HCT116 (cell line): ENCODE measurements at regions of chr11 and their contacts with region 1.

Region 1: GRCh38 chr11:61332797-61333549 is at the starts of genes DDB1 and TKFC:
- DNase-seq: peak; percentile 83
- ATAC-seq: peak; percentile 88
- H3K4me3 ChIP-seq: peak within 1 kb of the TSS; percentile 85 to 97
- H3K27ac ChIP-seq: peak within 1 kb of the TSS; percentile 92
- H3K4me1 ChIP-seq: peaks cover 28 to 46% of the 10 kb centered on the region in 2 experiments
- H3K27me3 ChIP-seq: no peaks in the 10 kb centered on the region
- CTCF ChIP-seq: no peak
- POLR2A ChIP-seq: peak; percentile 75
- RAD21 ChIP-seq: no peak
- total RNA-seq, gene DDB1: 269 TPM
- total RNA-seq, gene TKFC: 156 TPM

Region 2: DNA sequence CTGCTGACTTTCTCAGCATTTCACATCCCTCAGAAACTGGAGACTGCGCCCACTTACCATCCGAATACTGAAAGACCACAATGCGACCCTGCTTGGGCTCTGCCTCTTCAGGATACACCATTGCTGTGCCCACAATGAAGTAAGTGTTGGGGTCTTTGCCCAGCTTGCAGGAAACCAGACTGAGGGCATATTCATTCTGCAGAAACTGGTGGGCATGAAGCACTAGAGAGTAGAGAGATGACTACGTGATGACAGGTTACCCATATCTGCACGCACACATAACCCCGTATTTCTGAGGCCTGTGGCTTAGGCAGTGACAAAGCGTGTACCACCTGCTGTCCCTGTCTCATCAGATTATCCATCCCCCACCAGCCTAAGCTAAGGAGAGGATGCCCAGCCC is 23.2 kb before region 1 on chr11:
- CTCF ChIA-PET with region 1: no interaction called
- POLR2A ChIA-PET with region 1: no interaction called
- RAD21 ChIA-PET with region 1: no interaction called
- intact Hi-C with region 1: no loop called
- DNase-seq: no peak
- ATAC-seq: no peak
- H3K4me3 ChIP-seq: no peak overlapping the region
- H3K27ac ChIP-seq: no peak overlapping the region
- H3K4me1 ChIP-seq: no peaks in the 10 kb centered on the region
- H3K27me3 ChIP-seq: no peaks in the 10 kb centered on the region
- CTCF ChIP-seq: no peak
- POLR2A ChIP-seq: no peak
- RAD21 ChIP-seq: no peak

Region 3: GRCh38 chr11:61347916-61348461 is 15.0 kb after region 1 on chr11:
- CTCF ChIA-PET with region 1: interaction called, 14 read pairs
- POLR2A ChIA-PET with region 1: interaction called, 3 read pairs
- RAD21 ChIA-PET with region 1: no interaction called
- intact Hi-C with region 1: no loop called
- DNase-seq: no peak
- ATAC-seq: peak; percentile 36; the same call in 1 of the 2 replicates
- H3K4me3 ChIP-seq: no peak overlapping the region
- H3K27ac ChIP-seq: no peak overlapping the region
- H3K4me1 ChIP-seq: no peaks in the 10 kb centered on the region
- H3K27me3 ChIP-seq: no peaks in the 10 kb centered on the region
- CTCF ChIP-seq: no peak
- POLR2A ChIP-seq: no peak
- RAD21 ChIP-seq: no peak

Region 4: GRCh38 chr11:61361686-61362541 is 28.9 kb after region 1 on chr11 and contains the starts of genes CYB561A3 and TMEM138:
- CTCF ChIA-PET with region 1: interaction called, 17 read pairs
- POLR2A ChIA-PET with region 1: interaction called, 45 read pairs
- RAD21 ChIA-PET with region 1: no interaction called
- intact Hi-C with region 1: no loop called
- DNase-seq: peak; percentile 88
- ATAC-seq: peak; percentile 92
- H3K4me3 ChIP-seq: peak within 1 kb of the TSS; percentile 89 to 93
- H3K27ac ChIP-seq: peak within 1 kb of the TSS; percentile 97
- H3K4me1 ChIP-seq: peaks cover 0 to 22% of the 10 kb centered on the region in 2 experiments; a peak in 2 of 4 replicates
- H3K27me3 ChIP-seq: no peaks in the 10 kb centered on the region
- CTCF ChIP-seq: no peak
- POLR2A ChIP-seq: peak; percentile 92
- RAD21 ChIP-seq: no peak
- total RNA-seq, gene CYB561A3: 34.1 TPM
- total RNA-seq, gene TMEM138: 45.0 TPM

Region 5: GRCh38 chr11:61384271-61385242 is 51.6 kb after region 1 on chr11:
- CTCF ChIA-PET with region 1: interaction called, 120 read pairs
- POLR2A ChIA-PET with region 1: interaction called, 14 read pairs
- RAD21 ChIA-PET with region 1: interaction called, 14 to 15 read pairs
- intact Hi-C with region 1: loop called (anchors 1 kb)
- DNase-seq: no peak
- ATAC-seq: peak; percentile 31; the same call in 1 of the 2 replicates
- H3K4me3 ChIP-seq: no peak overlapping the region
- H3K27ac ChIP-seq: no peak overlapping the region; the same call in 1 of the 2 replicates
- H3K4me1 ChIP-seq: no peaks in the 10 kb centered on the region
- H3K27me3 ChIP-seq: no peaks in the 10 kb centered on the region
- CTCF ChIP-seq: peak; percentile 3 to 32 (median 20); a peak in 2 of 6 replicates
- POLR2A ChIP-seq: no peak
- RAD21 ChIP-seq: peak; percentile 36

Region 6: GRCh38 chr11:61392981-61393595 is 60.1 kb after region 1 on chr11:
- CTCF ChIA-PET with region 1: interaction called, 14 read pairs
- POLR2A ChIA-PET with region 1: interaction called, 7 read pairs
- RAD21 ChIA-PET with region 1: no interaction called
- intact Hi-C with region 1: loop called (anchors 2 kb)
- DNase-seq: no peak
- ATAC-seq: peak; percentile 50
- H3K4me3 ChIP-seq: peak overlapping the region; percentile 76 to 81
- H3K27ac ChIP-seq: peak overlapping the region; percentile 90
- H3K4me1 ChIP-seq: peaks cover 3 to 16% of the 10 kb centered on the region in 2 experiments
- H3K27me3 ChIP-seq: no peaks in the 10 kb centered on the region
- CTCF ChIP-seq: peak; percentile 16 to 32 (median 19); a peak in 3 of 6 replicates
- POLR2A ChIP-seq: no peak
- RAD21 ChIP-seq: peak; percentile 49

Region 7: DNA sequence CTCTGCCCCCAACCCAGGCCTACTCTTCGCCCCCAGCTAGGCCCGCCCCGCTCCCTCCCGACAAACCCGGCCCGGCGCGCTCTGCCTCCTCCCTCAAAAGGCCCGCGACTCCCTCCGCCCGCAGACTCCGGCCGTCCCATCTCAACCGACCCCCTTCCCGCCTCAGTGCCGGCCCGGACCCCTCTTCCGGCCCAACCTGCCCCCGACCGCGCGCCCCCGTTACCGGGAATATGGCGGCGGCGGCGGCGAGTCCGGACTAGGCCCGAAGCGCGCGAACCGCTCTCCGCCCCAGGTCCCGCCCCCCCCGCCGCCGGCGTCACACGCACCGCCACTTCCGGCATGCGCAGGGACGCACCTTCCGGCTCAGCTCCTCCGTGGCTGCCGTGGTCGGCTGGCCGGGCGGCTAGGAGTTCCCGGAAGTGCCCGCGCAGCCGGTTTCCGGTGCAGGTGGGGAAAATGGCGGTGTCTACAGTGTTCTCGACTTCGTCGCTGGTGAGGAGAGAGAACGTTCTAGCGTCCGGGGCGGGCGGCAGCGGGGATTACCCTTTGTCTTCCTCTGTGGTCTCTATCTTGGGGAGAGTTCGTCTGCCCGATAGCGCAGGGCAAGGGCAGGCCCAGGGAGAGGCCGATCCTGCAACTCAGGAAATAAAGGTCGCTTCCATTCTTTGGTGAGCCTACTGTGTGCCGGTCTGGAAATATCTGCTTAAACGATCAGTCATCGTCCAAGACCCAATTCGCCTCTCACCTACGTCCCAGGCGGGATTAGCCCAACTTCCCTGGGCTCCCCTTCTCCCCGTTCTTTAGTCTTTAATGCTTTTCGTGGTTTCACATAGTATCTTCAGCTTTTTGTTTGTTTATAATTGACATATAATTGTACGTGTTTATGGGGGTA is 97.0 kb after region 1 on chr11 and contains the starts of genes CPSF7 and SDHAF2:
- CTCF ChIA-PET with region 1: interaction called, 10 read pairs
- POLR2A ChIA-PET with region 1: interaction called, 4 read pairs
- RAD21 ChIA-PET with region 1: no interaction called
- intact Hi-C with region 1: no loop called
- DNase-seq: peak; percentile 84
- ATAC-seq: peak; percentile 92
- H3K4me3 ChIP-seq: peak within 1 kb of the TSS; percentile 92 to 100
- H3K27ac ChIP-seq: peak within 1 kb of the TSS; percentile 96
- H3K4me1 ChIP-seq: peaks cover 10 to 20% of the 10 kb centered on the region in 2 experiments
- H3K27me3 ChIP-seq: no peaks in the 10 kb centered on the region
- CTCF ChIP-seq: no peak
- POLR2A ChIP-seq: peak; percentile 59
- RAD21 ChIP-seq: no peak
- total RNA-seq, gene CPSF7: 110 TPM
- total RNA-seq, gene SDHAF2: 34.0 TPM